Aorta (tissue), 5 donors: ENCODE measurements at regions of chr22 and their contacts with region 1.

Region 1: GRCh38 chr22:38347897-38348750 is 30.9 kb upstream of the CSNK1E start:
- DNase-seq: peak in 1 of 2 donors; percentile 29
- ATAC-seq: no peak
- H3K4me3 ChIP-seq: no peak overlapping the region
- H3K27ac ChIP-seq: no peak overlapping the region
- H3K4me1 ChIP-seq: no peaks in the 10 kb centered on the region
- H3K27me3 ChIP-seq: no peaks in the 10 kb centered on the region

Region 2: GRCh38 chr22:38262051-38262795 is 85.9 kb before region 1 on chr22:
- intact Hi-C with region 1: loop called (anchors 2 to 5 kb)
- DNase-seq: peak; percentile 61 to 85
- ATAC-seq: peak; percentile 38
- H3K4me3 ChIP-seq: no peak overlapping the region
- H3K27ac ChIP-seq: no peak overlapping the region
- H3K4me1 ChIP-seq: peaks cover 0 to 8% of the 10 kb centered on the region in 2 donors
- H3K27me3 ChIP-seq: no peaks in the 10 kb centered on the region

Region 3: GRCh38 chr22:38317122-38317994 is 30.8 kb before region 1 on chr22 and contains the start of gene CSNK1E:
- intact Hi-C with region 1: no loop called
- DNase-seq: peak; percentile 86 to 94
- ATAC-seq: peak; percentile 84
- H3K4me3 ChIP-seq: peak within 1 kb of the TSS; percentile 86 to 92
- H3K27ac ChIP-seq: peak within 1 kb of the TSS; percentile 94 to 95
- H3K4me1 ChIP-seq: peaks cover 0 to 2% of the 10 kb centered on the region in 2 donors
- H3K27me3 ChIP-seq: no peaks in the 10 kb centered on the region
- total RNA-seq, gene CSNK1E: 144 to 167 TPM